Breast epithelium (tissue), 4 donors: ENCODE measurements at regions of chr17 and their contacts with region 1.

Region 1: DNA sequence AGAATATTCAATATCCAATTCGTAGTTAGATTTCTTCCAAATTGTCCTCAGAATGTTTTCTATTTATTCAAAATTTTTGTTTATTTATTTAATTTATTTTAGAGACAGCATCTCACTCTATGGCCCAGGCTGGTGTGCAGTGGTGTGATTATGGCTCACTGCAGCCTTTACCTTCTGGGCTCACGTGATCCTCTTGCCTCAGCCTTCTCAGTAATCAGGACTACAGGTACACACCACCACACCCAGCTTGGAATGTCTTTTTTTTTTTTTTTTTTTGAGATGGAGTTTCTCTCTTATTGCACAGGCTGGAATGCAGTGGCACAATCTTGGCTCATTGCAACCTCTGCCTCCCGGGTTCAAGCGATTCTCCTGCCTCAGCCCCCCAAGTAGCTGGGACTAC is 3.5 kb upstream of the DRG2 start:
- DNase-seq: no peak
- H3K4me3 ChIP-seq: no peak overlapping the region
- H3K27ac ChIP-seq: no peak overlapping the region
- H3K4me1 ChIP-seq: no peaks in the 10 kb centered on the region
- H3K27me3 ChIP-seq: no peaks in the 10 kb centered on the region
- CTCF ChIP-seq: no peak
- POLR2A ChIP-seq: no peak

Region 2: DNA sequence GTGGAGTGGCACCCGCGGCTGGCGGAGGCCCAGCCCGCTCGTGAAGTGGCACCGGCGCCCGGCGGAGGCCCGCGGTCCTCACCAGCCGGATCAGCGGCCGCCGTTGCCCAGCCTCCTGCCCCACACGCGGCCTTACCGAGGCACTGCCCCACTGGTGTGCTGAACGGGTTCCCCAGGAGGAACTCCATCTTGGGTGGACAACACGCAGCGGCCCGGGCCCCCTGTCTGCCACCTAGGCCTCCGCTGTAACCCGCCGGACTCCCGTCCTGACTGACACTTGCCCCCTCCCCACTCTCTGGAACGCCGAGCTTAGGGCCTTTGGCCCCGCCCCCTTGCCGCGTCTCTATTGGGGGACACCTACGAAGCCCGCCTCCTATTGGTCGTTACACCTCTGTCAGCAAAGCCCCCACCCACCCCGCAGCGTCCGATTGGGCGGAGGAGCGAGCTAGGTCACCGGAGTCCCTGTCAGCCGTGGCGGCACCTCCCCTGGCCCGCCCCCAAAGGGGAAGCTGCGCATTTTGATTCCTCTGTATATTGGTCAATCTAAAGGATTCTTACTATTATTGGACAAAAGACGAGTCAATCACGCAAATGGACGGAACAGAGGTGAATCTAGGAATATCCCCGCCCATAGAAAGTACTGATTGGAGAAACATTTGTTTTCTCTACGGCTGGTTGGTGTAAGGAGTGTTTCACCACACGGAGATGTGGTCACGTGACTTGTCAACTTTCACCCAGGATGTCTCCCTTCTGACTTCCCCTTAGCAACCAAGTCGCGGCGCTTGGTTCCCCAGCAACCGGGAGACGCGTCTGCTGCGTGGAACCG is 111.9 kb before region 1 on chr17 and contains the starts of genes DRC3 and TOM1L2:
- intact Hi-C with region 1: no loop called
- DNase-seq: peak; percentile 100
- H3K4me3 ChIP-seq: peak within 1 kb of the TSS; percentile 84 to 98 (median 96)
- H3K27ac ChIP-seq: peak within 1 kb of the TSS; percentile 98
- H3K4me1 ChIP-seq: peaks cover 0 to 12% of the 10 kb centered on the region in 2 donors
- H3K27me3 ChIP-seq: no peaks in the 10 kb centered on the region
- CTCF ChIP-seq: peak in 2 of 3 donors; percentile 12 to 24
- POLR2A ChIP-seq: peak; percentile 90
- total RNA-seq, gene DRC3: 0.96 to 18.0 (median 10.5) TPM
- total RNA-seq, gene TOM1L2: 32.3 to 39.1 (median 36.4) TPM

Region 3: GRCh38 chr17:18102640-18103039 is 18.4 kb after region 1 on chr17:
- intact Hi-C with region 1: no loop called
- DNase-seq: no peak
- H3K4me3 ChIP-seq: no peak overlapping the region
- H3K27ac ChIP-seq: no peak overlapping the region
- H3K4me1 ChIP-seq: no peaks in the 10 kb centered on the region
- H3K27me3 ChIP-seq: no peaks in the 10 kb centered on the region
- CTCF ChIP-seq: no peak
- POLR2A ChIP-seq: no peak

Region 4: GRCh38 chr17:18122990-18123753 is 38.9 kb after region 1 on chr17:
- intact Hi-C with region 1: loop called (anchors 2 kb)
- DNase-seq: no peak
- H3K4me3 ChIP-seq: no peak overlapping the region
- H3K27ac ChIP-seq: no peak overlapping the region
- H3K4me1 ChIP-seq: no peaks in the 10 kb centered on the region
- H3K27me3 ChIP-seq: no peaks in the 10 kb centered on the region
- CTCF ChIP-seq: no peak
- POLR2A ChIP-seq: no peak